Heart right ventricle (tissue), 16 donors: ENCODE measurements at regions of chr1 and their contacts with region 1.

Region 1: GRCh38 chr1:185821612-185822385 is 87.6 kb downstream of the HMCN1 start:
- DNase-seq: no peak
- ATAC-seq: no peak
- H3K4me3 ChIP-seq: no peak overlapping the region
- H3K27ac ChIP-seq: no peak overlapping the region
- H3K4me1 ChIP-seq: peaks cover 0 to 11% (median 0%) of the 10 kb centered on the region in 9 donors
- H3K27me3 ChIP-seq: no peaks in the 10 kb centered on the region
- CTCF ChIP-seq: no peak

Region 2: DNA sequence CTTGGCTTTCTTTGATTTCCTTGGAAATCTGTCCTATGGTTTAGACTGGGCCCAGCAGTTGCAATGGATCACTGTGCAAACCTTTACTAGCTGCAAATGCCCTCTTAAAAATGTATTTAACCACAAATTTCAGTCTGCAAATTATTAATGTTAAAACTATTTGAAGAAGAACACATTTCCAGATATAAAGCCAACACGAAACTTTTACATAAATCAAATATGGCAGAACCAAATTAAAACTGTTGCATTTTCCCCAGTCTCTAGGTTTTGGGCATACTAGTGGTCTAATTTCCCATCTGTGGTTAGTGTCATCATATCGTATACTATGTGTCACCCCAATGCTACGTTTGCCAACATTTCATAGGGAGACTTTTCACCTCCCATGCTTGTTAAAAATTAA is 35.3 kb before region 1 on chr1:
- intact Hi-C with region 1: no loop called
- DNase-seq: no peak
- ATAC-seq: no peak
- H3K4me3 ChIP-seq: no peak overlapping the region
- H3K27ac ChIP-seq: no peak overlapping the region
- H3K4me1 ChIP-seq: peaks cover 0 to 42% (median 28%) of the 10 kb centered on the region in 9 donors
- H3K27me3 ChIP-seq: no peaks in the 10 kb centered on the region
- CTCF ChIP-seq: no peak

Region 3: GRCh38 chr1:185939142-185939541 is 117.3 kb after region 1 on chr1:
- intact Hi-C with region 1: no loop called
- DNase-seq: no peak
- ATAC-seq: no peak
- H3K4me3 ChIP-seq: no peak overlapping the region
- H3K27ac ChIP-seq: peak overlapping the region in 1 of 10 donors; percentile 33
- H3K4me1 ChIP-seq: peaks cover 0 to 11% (median 0%) of the 10 kb centered on the region in 9 donors
- H3K27me3 ChIP-seq: no peaks in the 10 kb centered on the region
- CTCF ChIP-seq: no peak

Region 4: DNA sequence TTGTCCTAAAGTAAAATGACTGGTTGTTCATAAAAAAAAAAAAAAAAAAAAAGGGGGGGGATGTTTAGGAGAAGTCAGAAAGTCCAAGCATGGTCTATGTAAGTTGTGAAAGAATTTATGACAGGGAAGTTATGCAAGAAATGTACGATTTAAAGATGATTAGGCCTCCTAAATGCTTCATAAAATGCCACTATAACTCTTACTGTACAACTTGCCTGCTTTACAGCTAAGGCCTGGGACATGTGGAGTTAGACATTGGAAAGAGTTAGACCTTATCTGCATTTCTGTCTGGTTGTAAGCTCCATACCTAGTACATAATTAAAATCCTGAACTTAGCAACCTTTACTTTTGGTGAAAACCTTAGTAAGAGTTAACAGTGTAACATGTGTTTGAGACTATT is 403.3 kb after region 1 on chr1:
- intact Hi-C with region 1: loop called in 1 of 10 experiments (anchors 10 kb)
- DNase-seq: no peak
- ATAC-seq: no peak
- H3K4me3 ChIP-seq: no peak overlapping the region
- H3K27ac ChIP-seq: no peak overlapping the region
- H3K4me1 ChIP-seq: no peaks in the 10 kb centered on the region
- H3K27me3 ChIP-seq: no peaks in the 10 kb centered on the region
- CTCF ChIP-seq: no peak